Left ventricle myocardium superior (tissue), 1 donor: ENCODE measurements at regions of chr1 and their contacts with region 1.

Region 1: DNA sequence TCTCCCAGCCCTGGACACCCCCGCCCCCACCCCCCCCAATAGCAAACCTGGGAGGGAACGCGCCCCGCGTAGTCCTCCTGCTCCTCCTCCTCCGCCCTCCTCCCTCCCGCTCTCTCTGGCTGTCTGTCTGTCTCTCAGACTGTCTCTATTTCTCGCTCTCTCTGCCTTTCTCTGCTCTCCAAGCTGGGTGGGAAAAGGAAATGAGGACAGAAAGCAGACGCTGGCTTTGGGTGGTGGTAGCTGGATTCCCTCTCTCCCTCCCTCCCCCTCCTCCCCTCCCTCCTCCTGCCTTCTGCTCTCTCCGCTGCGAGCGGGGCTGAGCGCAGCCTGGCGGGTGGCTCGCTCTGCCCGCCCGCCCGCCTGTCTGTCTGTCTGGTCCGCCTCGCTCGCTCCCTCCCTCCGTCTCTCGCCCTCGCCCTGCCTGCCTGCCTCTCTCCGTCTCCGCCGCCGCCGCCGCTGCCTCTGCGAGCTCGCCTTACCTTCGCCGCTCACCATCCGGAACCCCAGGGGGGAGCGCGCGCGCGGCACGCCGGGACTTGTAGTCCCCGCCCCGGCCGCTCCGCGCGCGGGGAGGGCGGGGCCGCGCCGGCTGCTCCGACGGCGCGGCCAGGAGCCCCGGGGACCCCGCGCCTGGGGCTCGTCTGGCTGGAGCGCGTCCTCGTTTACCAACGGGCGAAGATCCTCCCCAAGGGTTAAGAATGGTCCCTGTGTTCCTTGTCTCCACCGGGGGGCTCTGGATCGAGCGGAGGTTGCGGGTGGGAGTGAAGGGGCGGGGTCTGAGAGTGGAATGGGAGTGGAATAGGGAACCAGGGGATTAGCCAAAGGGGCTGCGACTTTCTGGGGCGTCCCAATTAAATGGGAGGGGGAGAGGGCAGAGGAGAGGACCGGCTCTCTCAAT is at the start of gene AHDC1:
- DNase-seq: peak; percentile 96
- ATAC-seq: peak; percentile 72
- total RNA-seq, gene AHDC1: 42.8 TPM

Region 2: DNA sequence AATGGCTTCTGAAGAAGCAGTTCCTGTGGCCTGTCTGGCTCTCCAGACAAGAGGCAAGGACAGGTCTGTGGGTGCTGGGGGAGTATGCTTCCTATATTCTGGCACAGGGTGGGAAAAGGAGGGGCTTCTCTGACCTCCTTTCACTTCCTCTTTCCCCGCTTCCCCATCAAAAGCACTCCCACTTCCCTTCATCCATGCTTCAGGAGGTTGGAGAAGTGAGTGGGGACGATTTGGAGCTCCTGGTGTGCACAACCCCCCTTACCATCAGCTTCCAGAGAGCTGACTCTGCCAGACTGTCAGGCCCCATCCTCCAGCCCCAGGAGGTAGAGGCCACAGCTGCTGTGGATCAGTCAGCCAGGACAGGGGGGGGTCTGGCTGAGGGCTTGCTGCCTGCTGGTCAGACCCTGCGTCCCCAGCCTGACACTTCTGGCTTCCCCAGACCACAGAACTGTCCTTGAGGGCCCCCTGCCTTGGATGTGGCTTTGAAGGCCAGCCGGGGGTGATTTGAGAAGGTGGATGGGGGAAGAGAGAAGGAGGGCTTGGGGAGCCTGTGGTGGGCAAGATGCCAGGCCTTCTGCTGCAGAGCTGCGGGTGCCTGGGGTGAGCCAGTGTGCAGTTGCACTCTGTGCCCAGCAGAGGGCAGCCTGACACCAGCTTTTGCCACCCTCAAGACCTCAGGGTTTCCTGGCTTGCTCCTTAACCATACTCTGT is 303.4 kb before region 1 on chr1:
- intact Hi-C with region 1: loop called (anchors 5 kb)
- DNase-seq: peak; percentile 88
- ATAC-seq: peak; percentile 85

Region 3: GRCh38 chr1:27563591-27564471 is 40.1 kb before region 1 on chr1:
- intact Hi-C with region 1: loop called (anchors 5 kb)
- DNase-seq: peak; percentile 85
- ATAC-seq: peak; percentile 58

Region 4: GRCh38 chr1:27662707-27663393 is 58.9 kb after region 1 on chr1:
- intact Hi-C with region 1: loop called (anchors 5 kb)
- DNase-seq: peak; percentile 86
- ATAC-seq: peak; percentile 56